ENCODE measurements at regions of chrX and their contacts with region 1.

Region 1: GRCh38 chrX:37825209-37825842 is 22.0 kb downstream of the DYNLT3 start:
- DNase-seq: peak; percentile 33
- ATAC-seq: peak; percentile 65
- H3K4me3 Mint-ChIP-seq: no peak overlapping the region
- H3K27ac Mint-ChIP-seq: peak overlapping the region; percentile 61
- H3K4me1 Mint-ChIP-seq: peaks cover 25% of the 10 kb centered on the region
- H3K27me3 Mint-ChIP-seq: no peaks in the 10 kb centered on the region

Region 2: GRCh38 chrX:37745354-37745753 is 80.0 kb before region 1 on chrX:
- POLR2A ChIA-PET with region 1: interaction called, 15 read pairs
- DNase-seq: peak; percentile 79
- ATAC-seq: peak; percentile 85
- H3K4me3 Mint-ChIP-seq: no peak overlapping the region
- H3K27ac Mint-ChIP-seq: peak overlapping the region; percentile 78
- H3K4me1 Mint-ChIP-seq: peaks cover 15% of the 10 kb centered on the region
- H3K27me3 Mint-ChIP-seq: peaks cover 2% of the 10 kb centered on the region

Region 3: GRCh38 chrX:37871626-37872302 is 46.4 kb after region 1 on chrX:
- POLR2A ChIA-PET with region 1: no interaction called
- DNase-seq: no peak
- ATAC-seq: no peak
- H3K4me3 Mint-ChIP-seq: no peak overlapping the region
- H3K27ac Mint-ChIP-seq: no peak overlapping the region
- H3K4me1 Mint-ChIP-seq: peaks cover 2% of the 10 kb centered on the region
- H3K27me3 Mint-ChIP-seq: peaks cover 3% of the 10 kb centered on the region

Region 4: DNA sequence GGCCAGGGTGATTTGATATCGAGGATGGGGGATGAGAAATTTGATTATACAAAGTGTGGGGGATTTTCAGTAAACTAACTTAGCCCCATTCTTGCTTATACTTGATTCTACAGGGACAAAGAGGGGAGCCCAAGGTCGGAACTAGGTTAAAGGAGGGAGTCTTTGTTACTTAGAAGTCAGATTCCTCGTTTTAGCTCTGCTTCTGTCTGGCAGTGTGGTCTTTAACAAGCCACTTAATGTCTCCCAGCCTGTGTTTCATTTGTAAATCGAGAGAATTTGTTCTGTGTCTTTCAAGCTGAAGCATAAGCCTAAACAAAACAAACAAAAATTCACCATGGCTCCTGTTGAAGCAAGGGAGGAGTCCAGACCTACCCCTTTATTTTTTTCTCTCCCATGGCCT is 118.2 kb after region 1 on chrX:
- POLR2A ChIA-PET with region 1: no interaction called
- DNase-seq: no peak
- ATAC-seq: no peak
- H3K4me3 Mint-ChIP-seq: no peak overlapping the region
- H3K27ac Mint-ChIP-seq: no peak overlapping the region
- H3K4me1 Mint-ChIP-seq: no peaks in the 10 kb centered on the region
- H3K27me3 Mint-ChIP-seq: peaks cover 6% of the 10 kb centered on the region

Measured in activated naive CD8-positive, alpha-beta T cell treated with anti-CD3 and anti-CD28 coated beads, Interleukin-2, amount 10 ng/mL, durations not matched to agents 7 days and 5 days (primary cell).